IMR-90 (cell line): ENCODE measurements at regions of chr10 and their contacts with region 1.

Region 1: DNA sequence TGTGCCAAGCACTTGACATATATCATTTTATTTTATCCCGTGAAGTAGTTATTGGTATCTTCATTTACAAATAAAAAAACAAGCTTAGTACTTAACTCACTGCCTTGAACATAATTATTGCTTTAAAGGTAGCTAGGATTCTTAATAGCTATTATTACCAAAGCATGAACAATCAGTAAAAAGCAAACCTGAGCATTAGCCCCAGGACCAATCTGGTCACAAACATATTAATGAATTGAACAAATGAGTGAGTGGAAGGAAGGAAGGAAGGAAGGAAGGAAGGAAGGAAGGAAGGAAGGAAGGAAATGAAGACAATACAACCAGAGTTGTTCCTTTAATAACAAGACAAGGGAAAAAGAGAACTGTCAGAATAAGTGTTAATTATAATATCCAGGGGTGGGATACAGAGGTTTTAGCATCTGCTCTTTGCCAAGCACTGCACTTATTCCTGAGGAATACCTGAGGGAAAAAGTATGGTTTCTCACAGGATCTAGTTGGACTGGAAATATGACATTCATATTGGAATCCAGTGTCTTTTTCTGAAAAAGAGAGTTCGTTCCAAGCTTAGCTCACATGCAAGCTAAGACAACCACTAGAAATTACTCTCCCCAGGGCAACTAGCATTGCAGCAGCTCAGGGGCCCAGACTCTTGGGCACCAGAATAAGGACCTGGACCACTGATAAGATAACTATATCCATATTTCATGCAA is 172.9 kb upstream of the MGMT start:
- DNase-seq: no peak
- ATAC-seq: no peak
- H3K4me3 ChIP-seq: no peak overlapping the region
- H3K27ac ChIP-seq: no peak overlapping the region
- H3K4me1 ChIP-seq: no peaks in the 10 kb centered on the region; the same call in 1 of the 2 replicates
- H3K27me3 ChIP-seq: no peaks in the 10 kb centered on the region
- CTCF ChIP-seq: no peak
- POLR2A ChIP-seq: no peak
- RAD21 ChIP-seq: no peak

Region 2: DNA sequence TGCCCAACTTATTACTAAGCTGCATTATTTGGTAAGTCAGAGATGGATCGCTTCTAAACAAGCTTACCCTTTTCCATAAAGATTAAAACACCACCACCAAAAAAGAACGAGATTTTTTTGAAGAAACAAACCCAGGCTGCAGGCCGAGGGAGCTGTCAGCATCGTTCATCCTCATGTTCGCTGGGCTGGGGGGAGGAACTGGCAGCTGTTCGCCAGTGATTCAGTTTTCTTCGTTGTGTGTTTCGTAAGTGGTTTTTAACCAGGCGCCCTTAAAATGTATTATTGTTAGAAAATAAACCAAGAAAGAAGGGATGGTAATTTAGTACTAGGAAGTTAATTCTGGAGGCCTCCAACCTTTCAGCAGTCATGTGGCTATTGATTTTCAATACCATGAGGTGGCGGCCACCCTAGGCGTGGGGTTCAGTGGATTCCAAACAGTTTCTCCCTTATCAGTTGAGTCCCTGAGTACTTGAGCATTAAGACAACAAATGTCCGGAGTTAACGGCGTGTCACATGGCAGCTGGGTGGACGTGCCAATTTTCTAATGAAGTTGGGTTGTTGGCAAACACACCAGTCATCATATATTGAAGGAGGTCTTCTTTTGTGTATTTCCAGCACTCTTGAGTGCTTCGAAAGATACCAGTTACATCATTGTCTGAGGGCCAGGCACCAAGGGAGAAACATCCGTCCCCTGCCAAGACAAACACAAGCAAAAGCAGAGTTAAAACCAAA is 496.7 kb after region 1 on chr10:
- CTCF ChIA-PET with region 1: no interaction called
- POLR2A ChIA-PET with region 1: interaction called, 11 read pairs
- dilution Hi-C with region 1: no loop called
- in situ Hi-C with region 1: no loop called
- intact Hi-C with region 1: no loop called
- DNase-seq: no peak
- ATAC-seq: no peak; the same call in 1 of the 2 replicates
- H3K4me3 ChIP-seq: no peak overlapping the region
- H3K27ac ChIP-seq: no peak overlapping the region
- H3K4me1 ChIP-seq: no peaks in the 10 kb centered on the region
- H3K27me3 ChIP-seq: no peaks in the 10 kb centered on the region
- CTCF ChIP-seq: no peak
- POLR2A ChIP-seq: no peak
- RAD21 ChIP-seq: no peak